ENCODE measurements at regions of chr11 and their contacts with region 1.

Region 1: DNA sequence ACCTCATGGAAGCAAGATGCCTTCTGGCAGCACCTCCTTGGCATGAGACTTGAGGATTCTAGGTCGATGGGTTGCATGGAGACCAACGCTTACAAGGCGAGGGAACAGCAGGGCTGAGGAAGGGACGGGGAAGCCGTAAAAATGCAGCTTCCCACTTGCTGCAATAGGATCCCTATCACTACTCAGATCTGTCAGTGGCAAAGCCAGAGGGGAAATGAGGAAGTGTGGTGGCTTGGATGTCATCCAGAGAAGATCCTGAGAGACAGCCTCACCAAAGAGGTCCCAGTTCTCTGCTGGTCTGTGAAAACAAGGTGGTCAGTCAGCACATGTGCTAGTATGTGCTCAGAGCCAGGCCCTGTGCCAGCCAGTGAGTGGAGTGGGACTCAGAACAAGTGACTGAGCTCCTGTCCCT is 22.2 kb downstream of the CYB5R2 start:
- DNase-seq: peak; percentile 18
- H3K4me3 ChIP-seq: no peak overlapping the region
- H3K27me3 ChIP-seq: no peaks in the 10 kb centered on the region
- CTCF ChIP-seq: no peak

Region 2: DNA sequence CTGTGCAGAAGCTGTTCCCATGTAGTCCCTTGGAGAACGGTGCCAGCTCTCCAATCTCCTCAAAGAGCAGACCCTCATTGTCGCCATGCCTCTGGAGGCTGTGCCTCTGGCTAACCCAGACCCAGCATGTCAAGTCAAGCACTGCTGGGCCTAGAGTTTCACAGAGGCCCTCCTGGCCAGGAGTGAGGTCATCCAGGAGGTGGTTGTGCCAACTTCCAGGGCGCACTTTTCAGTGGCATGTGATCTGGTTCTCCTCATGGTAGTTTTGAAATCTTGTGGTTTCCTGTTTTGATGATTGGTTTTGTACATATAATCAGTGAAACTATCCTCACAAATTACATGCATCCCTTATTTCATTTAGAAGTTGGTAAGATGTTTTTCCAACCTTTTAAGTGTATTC is 58.4 kb before region 1 on chr11:
- CTCF ChIA-PET with region 1: no interaction called
- POLR2A ChIA-PET with region 1: no interaction called
- DNase-seq: no peak
- H3K4me3 ChIP-seq: no peak overlapping the region
- H3K27me3 ChIP-seq: no peaks in the 10 kb centered on the region
- CTCF ChIP-seq: no peak

Region 3: DNA sequence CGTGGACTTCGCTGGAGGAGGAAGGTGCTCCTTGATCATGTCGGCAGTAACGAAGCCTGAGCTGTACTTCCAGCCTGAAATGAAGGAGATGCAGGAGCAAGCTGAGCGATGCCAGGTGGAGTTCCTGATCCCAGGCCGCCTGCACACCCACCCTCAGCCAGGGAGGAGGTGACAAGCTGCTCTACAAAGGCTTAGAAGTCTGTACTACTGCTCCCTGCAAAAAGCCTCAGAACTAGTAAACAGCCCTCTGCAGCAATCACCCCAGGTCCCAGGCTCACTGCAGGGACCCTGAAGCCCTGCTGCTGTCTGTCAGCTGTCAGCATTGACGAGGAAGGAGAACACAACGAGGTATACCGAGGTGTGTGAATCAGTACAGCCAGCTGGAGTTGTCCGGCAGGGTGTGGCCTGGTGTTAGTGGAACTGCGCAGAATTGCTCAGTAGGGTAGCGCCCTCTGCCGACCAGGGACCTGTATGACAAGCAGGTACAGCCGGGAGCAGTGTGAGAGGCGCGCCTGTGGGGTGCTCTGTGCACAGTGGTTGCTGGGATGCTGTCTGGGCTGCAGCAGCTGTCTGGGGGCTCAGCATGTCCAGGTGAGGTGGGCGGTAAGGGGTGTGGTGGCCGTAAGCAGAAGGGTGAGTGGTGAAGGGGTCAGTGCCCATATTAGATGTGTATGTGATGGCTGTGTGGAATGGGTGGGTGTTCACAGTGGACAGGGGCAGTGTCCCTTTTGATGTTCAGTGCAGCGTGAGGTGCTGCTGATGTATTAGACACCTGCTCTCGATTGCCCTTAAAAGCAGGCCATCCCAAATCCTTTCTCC is 14.5 kb after region 1 on chr11:
- CTCF ChIA-PET with region 1: interaction called, 22 read pairs
- POLR2A ChIA-PET with region 1: no interaction called
- DNase-seq: no peak
- H3K4me3 ChIP-seq: no peak overlapping the region
- H3K27me3 ChIP-seq: no peaks in the 10 kb centered on the region
- CTCF ChIP-seq: peak; percentile 90

Measured in BJ (cell line).